ENCODE measurements at regions of chr12 and their contacts with region 1.

Region 1: GRCh38 chr12:121223292-121224285 is 13.7 kb downstream of the P2RX4 start:
- DNase-seq: peak in 2 of 3 donors; percentile 68 to 70
- H3K4me3 ChIP-seq: no peak overlapping the region
- H3K27ac ChIP-seq: no peak overlapping the region
- H3K4me1 ChIP-seq: peaks cover 3 to 24% (median 21%) of the 10 kb centered on the region in 4 experiments
- H3K27me3 ChIP-seq: no peaks in the 10 kb centered on the region

Region 2: GRCh38 chr12:121240484-121241101 is 17.0 kb after region 1 on chr12:
- CTCF ChIA-PET with region 1: interaction called, 14 read pairs
- POLR2A ChIA-PET with region 1: no interaction called
- DNase-seq: peak; percentile 89 to 96 (median 92)
- H3K4me3 ChIP-seq: peak overlapping the region in 4 of 7 experiments; percentile 5 to 54 (median 30)
- H3K27ac ChIP-seq: peak overlapping the region; percentile 72 to 79
- H3K4me1 ChIP-seq: peaks cover 17 to 41% (median 37%) of the 10 kb centered on the region in 4 experiments
- H3K27me3 ChIP-seq: no peaks in the 10 kb centered on the region

Measured in common myeloid progenitor, CD34-positive (primary cell).